Activated T-helper 1 cell treated with anti-CD3 and anti-CD28 coated beads, Interleukin-12 subunit alpha, Interleukin-12 subunit beta, Interleukin-2, Interleukin-4 antibody, amounts not matched to agents 30 ng/mL and 10 ng/mL and 1 ng/mL, durations not matched to agents 14 hours and 24 hours and 36 hours (primary cell): ENCODE measurements at regions of chr5 and their contacts with region 1.

Region 1: DNA sequence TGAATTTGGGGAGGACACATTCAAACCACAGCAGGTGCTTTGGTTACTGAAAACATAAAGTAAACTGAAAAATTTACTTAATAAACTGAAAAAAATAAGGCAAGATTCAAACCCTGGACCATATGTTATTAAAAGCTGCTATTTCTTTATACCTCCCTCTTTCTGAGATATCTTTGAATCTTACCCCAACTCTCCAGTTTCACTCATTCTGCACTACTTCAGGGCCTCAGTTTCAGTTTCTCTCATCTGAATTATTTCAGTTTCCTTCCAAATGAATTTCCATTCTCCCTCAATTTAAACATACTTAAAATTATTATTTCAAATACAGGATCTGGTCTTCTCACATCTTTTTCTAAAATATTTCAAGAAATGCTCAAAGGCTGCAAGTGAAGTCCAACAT is 4.9 kb upstream of the OXCT1 start:
- DNase-seq: no peak
- H3K4me3 Mint-ChIP-seq: no peak overlapping the region
- H3K27ac Mint-ChIP-seq: no peak overlapping the region
- H3K4me1 Mint-ChIP-seq: peaks cover 26% of the 10 kb centered on the region
- H3K27me3 Mint-ChIP-seq: peaks cover 5% of the 10 kb centered on the region

Region 2: DNA sequence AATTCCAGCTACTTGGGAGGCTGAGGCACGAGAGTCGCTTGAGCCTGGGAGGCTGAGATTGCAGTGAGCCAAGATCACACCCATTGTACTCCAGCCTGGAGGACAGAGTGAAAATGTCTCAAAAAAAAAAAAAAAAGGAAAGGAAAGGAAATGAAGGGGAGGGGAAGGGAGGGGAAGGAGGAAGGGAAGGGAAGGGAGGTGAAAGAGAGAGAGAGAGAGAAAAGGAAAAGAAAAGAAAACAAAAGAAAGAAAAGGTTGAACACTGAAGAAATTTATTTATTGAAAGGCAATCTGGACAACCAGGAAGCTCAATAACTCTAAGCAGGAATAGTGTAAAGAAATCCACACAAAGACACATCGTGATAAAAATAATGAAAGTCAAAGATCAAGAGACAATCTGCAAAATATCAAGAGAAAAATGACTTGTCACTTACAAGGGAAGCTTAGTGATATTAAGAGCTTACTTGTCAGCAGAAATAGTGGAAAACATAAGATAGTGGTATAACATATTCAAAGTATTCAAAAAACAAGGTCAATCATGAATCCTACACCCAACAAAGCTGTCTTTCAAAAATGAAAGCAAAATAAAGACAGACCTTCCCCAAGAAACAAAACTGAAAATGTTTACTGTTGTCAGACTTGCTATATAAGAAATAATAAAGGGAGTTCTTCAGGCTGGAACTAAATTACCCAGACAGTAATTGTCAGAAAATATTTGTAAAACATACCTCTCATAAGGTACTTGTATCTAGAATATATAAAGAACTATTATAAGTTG is 18.1 kb after region 1 on chr5:
- intact Hi-C with region 1: loop called (anchors 1 kb)
- DNase-seq: no peak
- H3K4me3 Mint-ChIP-seq: peak overlapping the region; percentile 38
- H3K27ac Mint-ChIP-seq: peak overlapping the region; percentile 4
- H3K4me1 Mint-ChIP-seq: peaks cover 24% of the 10 kb centered on the region
- H3K27me3 Mint-ChIP-seq: peaks cover 19% of the 10 kb centered on the region